GM10248 (cell line): ENCODE measurements at regions of chr15 and their contacts with region 1.

Region 1: DNA sequence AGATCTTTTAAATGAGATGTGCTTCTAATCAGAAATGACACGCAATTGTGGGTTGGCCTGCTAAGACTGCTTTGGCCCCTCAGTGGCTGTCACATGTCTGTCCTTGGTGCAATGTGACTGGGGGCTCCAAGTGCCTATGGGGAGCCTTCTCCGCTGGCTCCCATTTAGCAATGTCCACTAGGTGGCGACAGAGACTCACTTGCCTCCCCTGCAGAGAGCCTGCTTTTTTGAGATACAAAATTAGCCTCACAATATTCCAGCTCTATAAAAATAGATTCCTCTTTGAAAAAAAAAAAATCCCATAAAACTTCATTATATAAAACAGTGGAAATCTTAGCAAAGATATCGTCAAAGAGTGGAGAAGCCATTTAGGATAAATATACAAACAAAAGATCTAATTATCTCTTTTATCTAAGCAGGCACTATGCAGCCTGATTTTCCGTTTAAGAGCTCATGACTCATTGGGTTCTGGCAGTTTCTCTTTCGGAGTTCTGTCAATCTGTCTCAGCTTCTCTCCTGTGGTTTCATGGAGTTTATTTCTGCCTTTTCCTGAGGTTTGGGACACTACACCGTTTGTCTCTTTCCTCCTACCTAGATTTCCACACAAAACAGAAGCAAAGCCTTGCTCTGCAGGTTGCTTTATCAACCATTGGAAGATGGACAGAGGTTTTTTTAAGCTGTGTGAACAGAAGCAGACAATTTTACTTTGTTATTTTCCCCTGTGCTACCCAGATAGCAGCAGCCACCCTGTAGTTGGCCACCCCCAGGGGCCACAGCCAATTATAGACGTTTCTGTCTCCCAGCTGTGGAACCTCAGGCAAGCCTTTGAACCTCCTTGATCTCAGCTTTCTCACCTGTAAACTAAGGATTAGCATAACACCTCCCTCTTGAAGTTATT is 68.4 kb upstream of the TNFAIP8L3 start:
- DNase-seq: peak; percentile 85
- CTCF ChIP-seq: peak; percentile 94

Region 2: GRCh38 chr15:50813877-50814276 is 349.2 kb before region 1 on chr15:
- CTCF ChIA-PET with region 1: no interaction called
- POLR2A ChIA-PET with region 1: no interaction called
- DNase-seq: no peak
- CTCF ChIP-seq: no peak

Region 3: GRCh38 chr15:51030649-51031316 is 132.3 kb before region 1 on chr15:
- CTCF ChIA-PET with region 1: no interaction called
- POLR2A ChIA-PET with region 1: no interaction called
- DNase-seq: no peak
- CTCF ChIP-seq: no peak

Region 4: GRCh38 chr15:51144021-51144532 is 19.0 kb before region 1 on chr15:
- CTCF ChIA-PET with region 1: interaction called, 33 read pairs
- POLR2A ChIA-PET with region 1: no interaction called
- DNase-seq: no peak
- CTCF ChIP-seq: no peak

Region 5: DNA sequence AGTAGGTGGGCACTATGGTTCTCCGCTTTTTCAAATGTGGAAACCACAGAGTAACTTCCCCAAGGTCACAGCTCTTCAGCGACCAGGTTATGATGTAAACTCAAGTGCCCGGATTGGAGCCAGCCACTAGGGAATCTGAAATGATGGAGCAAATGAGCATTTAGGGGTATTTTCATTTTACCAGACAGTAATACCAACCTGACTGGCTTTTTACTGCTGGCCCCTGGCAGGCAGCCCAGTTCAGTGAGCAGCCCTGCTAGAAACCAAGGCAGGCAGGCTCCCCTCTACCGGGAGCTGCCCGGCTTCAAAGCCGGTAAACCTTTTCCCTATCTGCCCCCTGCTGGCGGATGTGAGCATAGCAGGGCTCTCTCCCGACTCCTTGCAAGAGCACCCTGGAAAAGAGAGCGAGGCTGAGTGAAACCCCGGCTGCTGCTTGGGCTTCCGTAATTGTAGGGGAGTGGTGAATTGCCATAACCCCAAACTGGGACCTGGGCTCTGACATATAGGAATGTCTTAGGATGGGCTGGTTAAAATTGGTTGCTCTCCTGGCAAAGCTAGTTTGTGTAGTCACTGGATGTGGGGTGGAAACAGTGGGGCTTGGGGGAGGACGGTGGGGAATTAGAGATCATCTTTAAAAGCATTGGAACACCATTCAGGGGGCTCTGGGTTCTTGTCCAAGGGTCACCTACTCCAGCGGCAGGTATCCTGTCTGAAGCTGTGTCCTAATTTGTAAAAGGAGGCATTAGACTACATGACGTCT is 29.6 kb after region 1 on chr15:
- CTCF ChIA-PET with region 1: interaction called, 78 read pairs
- POLR2A ChIA-PET with region 1: interaction called, 4 read pairs
- DNase-seq: peak; percentile 76
- CTCF ChIP-seq: peak; percentile 89

Region 6: GRCh38 chr15:51203797-51204196 is 40.7 kb after region 1 on chr15:
- CTCF ChIA-PET with region 1: interaction called, 31 read pairs
- POLR2A ChIA-PET with region 1: no interaction called
- DNase-seq: no peak
- CTCF ChIP-seq: no peak

Region 7: GRCh38 chr15:51286791-51287190 is 123.7 kb after region 1 on chr15:
- CTCF ChIA-PET with region 1: interaction called, 32 read pairs
- POLR2A ChIA-PET with region 1: no interaction called
- DNase-seq: peak; percentile 37
- CTCF ChIP-seq: peak; percentile 27

Region 8: GRCh38 chr15:51380999-51381795 is 218.1 kb after region 1 on chr15:
- CTCF ChIA-PET with region 1: interaction called, 68 read pairs
- POLR2A ChIA-PET with region 1: no interaction called
- DNase-seq: peak; percentile 77
- CTCF ChIP-seq: peak; percentile 89